CD8-positive, alpha-beta T cell (primary cell): ENCODE measurements at regions of chr15 and their contacts with region 1.

Region 1: DNA sequence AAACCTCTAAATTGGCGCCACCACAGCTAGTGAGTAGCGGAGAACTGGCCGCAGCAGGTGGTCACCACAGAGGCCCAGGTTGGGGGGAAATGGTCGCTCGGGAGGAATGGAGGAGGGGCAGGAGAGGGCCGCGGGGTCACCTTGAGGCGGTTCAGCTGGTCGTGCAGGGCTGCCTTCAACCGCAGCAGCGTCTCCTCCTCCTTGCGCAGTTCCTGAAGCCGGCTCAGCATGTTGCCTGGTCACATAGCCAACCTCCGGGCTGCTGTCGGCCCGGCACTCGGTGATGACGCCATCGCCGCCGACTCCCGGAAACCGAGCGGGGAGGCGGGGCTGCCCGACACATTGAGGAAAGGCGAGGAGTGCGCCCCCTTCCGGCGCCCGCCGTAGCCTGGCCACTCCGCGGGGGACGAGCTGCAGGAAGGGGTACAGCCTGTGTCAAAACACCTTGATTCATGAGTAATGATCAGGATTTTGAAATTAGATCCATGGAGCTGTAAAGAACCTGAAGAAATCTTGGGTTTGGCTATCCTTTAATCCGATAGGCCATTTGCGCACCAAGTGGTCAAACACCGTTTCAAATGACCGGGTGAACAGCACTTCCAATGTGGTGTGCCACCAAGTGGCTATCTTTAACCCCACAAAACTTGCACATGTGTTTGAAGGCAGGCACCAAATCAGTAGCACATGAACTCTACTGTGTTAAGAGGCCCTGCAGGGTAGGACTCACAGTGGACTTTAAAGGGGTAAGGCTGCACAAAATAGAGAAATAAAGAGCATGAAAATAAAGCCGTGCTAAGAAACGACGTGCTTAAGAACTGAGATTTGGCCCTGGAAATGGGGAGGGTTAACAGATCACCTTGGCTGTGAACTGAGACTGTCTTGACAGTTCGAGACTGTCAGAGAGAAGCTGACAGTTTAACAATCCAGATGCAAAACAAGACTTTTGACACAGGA is at the start of gene SNAPC5:
- DNase-seq: peak; percentile 95 to 99 (median 97)
- ATAC-seq: peak; percentile 94
- H3K4me3 ChIP-seq: peak within 1 kb of the TSS; percentile 89 to 98
- H3K4me3 Mint-ChIP-seq: peak within 1 kb of the TSS; percentile 96
- H3K27ac ChIP-seq: peak within 1 kb of the TSS; percentile 93 to 96
- H3K27ac Mint-ChIP-seq: peak within 1 kb of the TSS; percentile 97
- H3K4me1 ChIP-seq: peaks cover 32% of the 10 kb centered on the region
- H3K4me1 Mint-ChIP-seq: peaks cover 57% of the 10 kb centered on the region
- H3K27me3 ChIP-seq: no peaks in the 10 kb centered on the region
- H3K27me3 Mint-ChIP-seq: no peaks in the 10 kb centered on the region
- CTCF ChIP-seq: peak; percentile 98
- total RNA-seq, gene SNAPC5: 22.3 to 25.3 TPM

Region 2: DNA sequence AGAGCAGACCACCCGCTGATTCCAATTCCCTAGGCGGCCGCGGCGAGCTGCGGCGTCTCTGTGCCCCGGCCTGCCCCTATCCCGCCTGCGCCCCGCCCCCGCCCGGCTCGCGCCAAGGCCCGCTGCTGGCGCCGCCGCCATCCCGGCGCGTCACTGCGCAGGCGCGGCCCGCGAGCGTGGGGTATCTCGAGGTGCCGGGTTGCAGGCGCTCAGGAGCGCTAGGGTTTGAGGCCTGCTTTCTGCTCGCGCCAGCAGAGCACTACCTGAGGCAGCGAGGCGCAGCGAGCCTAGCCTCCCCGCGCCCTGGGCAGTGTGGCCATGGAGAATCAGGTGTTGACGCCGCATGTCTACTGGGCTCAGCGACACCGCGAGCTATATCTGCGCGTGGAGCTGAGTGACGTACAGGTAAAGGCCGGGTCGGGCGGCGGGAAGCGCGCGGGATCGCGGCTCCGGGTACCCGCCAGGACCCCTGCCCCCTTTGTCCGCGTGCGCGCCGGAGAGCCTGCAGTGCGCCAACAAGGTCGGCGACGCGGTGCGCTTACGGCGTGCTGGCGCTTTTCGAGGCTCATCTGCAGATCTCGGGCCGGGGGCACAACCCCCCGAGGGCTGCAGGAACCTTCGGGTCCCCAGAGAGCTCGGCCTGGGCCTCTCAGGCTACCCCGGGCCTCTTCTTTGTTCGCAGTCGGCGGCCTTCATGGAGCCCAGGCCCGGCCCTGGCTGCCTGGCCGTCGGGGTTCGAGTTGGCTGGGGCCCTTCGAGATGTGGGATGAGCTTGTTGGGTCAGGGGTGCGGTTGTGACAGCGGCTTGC is 967.3 kb before region 1 on chr15 and contains the start of gene HACD3:
- CTCF ChIA-PET with region 1: no interaction called
- POLR2A ChIA-PET with region 1: no interaction called
- intact Hi-C with region 1: loop called in 1 of 2 experiments (anchors 5 kb)
- DNase-seq: peak; percentile 75 to 93 (median 88)
- ATAC-seq: peak; percentile 96
- H3K4me3 ChIP-seq: peak within 1 kb of the TSS; percentile 67 to 97
- H3K4me3 Mint-ChIP-seq: peak within 1 kb of the TSS; percentile 88
- H3K27ac ChIP-seq: peak within 1 kb of the TSS; percentile 68 to 76
- H3K27ac Mint-ChIP-seq: peak within 1 kb of the TSS; percentile 91
- H3K4me1 ChIP-seq: peaks cover 20% of the 10 kb centered on the region
- H3K4me1 Mint-ChIP-seq: peaks cover 39% of the 10 kb centered on the region
- H3K27me3 ChIP-seq: no peaks in the 10 kb centered on the region
- H3K27me3 Mint-ChIP-seq: no peaks in the 10 kb centered on the region
- CTCF ChIP-seq: no peak
- total RNA-seq, gene HACD3: 16.8 to 17.0 TPM

Region 3: GRCh38 chr15:66356345-66357236 is 141.2 kb before region 1 on chr15 and contains the start of gene TIPIN:
- CTCF ChIA-PET with region 1: interaction called, 13 read pairs
- POLR2A ChIA-PET with region 1: interaction called, 4 read pairs
- intact Hi-C with region 1: loop called (anchors 1 kb)
- DNase-seq: peak; percentile 92 to 98 (median 97)
- ATAC-seq: peak; percentile 97
- H3K4me3 ChIP-seq: peak within 1 kb of the TSS; percentile 69 to 76
- H3K4me3 Mint-ChIP-seq: peak within 1 kb of the TSS; percentile 99
- H3K27ac ChIP-seq: peak within 1 kb of the TSS; percentile 50 to 69
- H3K27ac Mint-ChIP-seq: peak within 1 kb of the TSS; percentile 96
- H3K4me1 ChIP-seq: peaks cover 14% of the 10 kb centered on the region
- H3K4me1 Mint-ChIP-seq: peaks cover 19% of the 10 kb centered on the region
- H3K27me3 ChIP-seq: no peaks in the 10 kb centered on the region
- H3K27me3 Mint-ChIP-seq: no peaks in the 10 kb centered on the region
- CTCF ChIP-seq: no peak
- total RNA-seq, gene TIPIN: 4.8 to 4.9 TPM

Region 4: GRCh38 chr15:66472176-66472999 is 25.4 kb before region 1 on chr15:
- CTCF ChIA-PET with region 1: interaction called, 12 read pairs
- POLR2A ChIA-PET with region 1: interaction called, 10 read pairs
- intact Hi-C with region 1: loop called in 1 of 2 experiments (anchors 1 kb)
- DNase-seq: peak in 8 of 9 experiments; percentile 1 to 86 (median 40)
- ATAC-seq: peak; percentile 92
- H3K4me3 ChIP-seq: no peak overlapping the region
- H3K4me3 Mint-ChIP-seq: peak overlapping the region; percentile 80
- H3K27ac ChIP-seq: peak overlapping the region; percentile 30 to 65
- H3K27ac Mint-ChIP-seq: peak overlapping the region; percentile 95
- H3K4me1 ChIP-seq: peaks cover 22% of the 10 kb centered on the region
- H3K4me1 Mint-ChIP-seq: peaks cover 36% of the 10 kb centered on the region
- H3K27me3 ChIP-seq: no peaks in the 10 kb centered on the region
- H3K27me3 Mint-ChIP-seq: no peaks in the 10 kb centered on the region
- CTCF ChIP-seq: no peak